WTC11 (cell line): ENCODE measurements at regions of chr5 and their contacts with region 1.

Region 1: GRCh38 chr5:141691867-141692532 is 10.0 kb upstream of the ARAP3 start:
- DNase-seq: peak; percentile 93
- ATAC-seq: peak; percentile 72
- H3K4me3 Mint-ChIP-seq: peak overlapping the region; percentile 69
- H3K27ac Mint-ChIP-seq: no peak overlapping the region
- H3K4me1 Mint-ChIP-seq: peaks cover 30% of the 10 kb centered on the region
- H3K27me3 Mint-ChIP-seq: peaks cover 10% of the 10 kb centered on the region
- CTCF ChIP-seq: peak; percentile 99

Region 2: DNA sequence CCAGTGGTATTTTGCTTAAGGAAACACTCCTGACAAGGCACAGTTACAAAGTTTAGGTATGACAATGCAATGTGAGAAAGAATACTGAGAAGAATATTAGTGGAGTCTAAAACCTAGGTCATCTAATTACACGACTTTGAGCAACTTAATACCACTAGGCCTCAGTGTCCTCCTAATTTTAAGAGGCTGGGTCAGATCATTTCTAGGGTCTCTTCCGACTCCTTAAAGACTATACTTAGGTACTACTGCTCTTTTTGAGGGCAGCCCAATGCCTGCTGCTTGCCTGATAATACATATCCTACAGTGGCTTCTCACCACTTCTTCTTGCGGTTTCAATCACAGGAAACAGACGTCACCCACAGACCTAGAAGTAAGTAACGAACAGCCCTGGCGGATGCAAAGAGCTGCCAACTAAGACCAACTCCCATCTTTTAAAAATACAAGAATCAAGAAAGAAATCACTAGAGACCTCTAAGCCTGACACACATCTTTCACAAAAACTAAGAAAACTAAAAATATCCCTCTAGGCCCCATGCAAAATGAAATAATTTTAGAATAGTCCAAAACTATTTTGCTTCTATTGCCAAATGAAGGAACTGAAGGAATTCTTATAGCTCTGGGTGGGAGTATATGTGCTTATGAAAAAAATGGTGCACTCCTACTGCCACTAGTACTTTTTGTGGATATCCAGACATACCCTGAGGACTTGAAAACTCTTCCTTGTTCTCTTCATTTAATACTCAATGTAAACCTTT is 86.3 kb before region 1 on chr5:
- CTCF ChIA-PET with region 1: no interaction called
- POLR2A ChIA-PET with region 1: no interaction called
- DNase-seq: no peak
- ATAC-seq: no peak; the same call in 1 of the 2 replicates
- H3K4me3 Mint-ChIP-seq: no peak overlapping the region
- H3K27ac Mint-ChIP-seq: peak overlapping the region; percentile 8
- H3K4me1 Mint-ChIP-seq: peaks cover 14% of the 10 kb centered on the region
- H3K27me3 Mint-ChIP-seq: no peaks in the 10 kb centered on the region
- CTCF ChIP-seq: no peak

Region 3: GRCh38 chr5:141672848-141673813 is 18.9 kb before region 1 on chr5:
- CTCF ChIA-PET with region 1: interaction called, 23 read pairs
- POLR2A ChIA-PET with region 1: no interaction called
- DNase-seq: no peak
- ATAC-seq: peak; percentile 2; the same call in 1 of the 2 replicates
- H3K4me3 Mint-ChIP-seq: no peak overlapping the region
- H3K27ac Mint-ChIP-seq: peak overlapping the region; percentile 42
- H3K4me1 Mint-ChIP-seq: peaks cover 32% of the 10 kb centered on the region
- H3K27me3 Mint-ChIP-seq: no peaks in the 10 kb centered on the region
- CTCF ChIP-seq: no peak

Region 4: DNA sequence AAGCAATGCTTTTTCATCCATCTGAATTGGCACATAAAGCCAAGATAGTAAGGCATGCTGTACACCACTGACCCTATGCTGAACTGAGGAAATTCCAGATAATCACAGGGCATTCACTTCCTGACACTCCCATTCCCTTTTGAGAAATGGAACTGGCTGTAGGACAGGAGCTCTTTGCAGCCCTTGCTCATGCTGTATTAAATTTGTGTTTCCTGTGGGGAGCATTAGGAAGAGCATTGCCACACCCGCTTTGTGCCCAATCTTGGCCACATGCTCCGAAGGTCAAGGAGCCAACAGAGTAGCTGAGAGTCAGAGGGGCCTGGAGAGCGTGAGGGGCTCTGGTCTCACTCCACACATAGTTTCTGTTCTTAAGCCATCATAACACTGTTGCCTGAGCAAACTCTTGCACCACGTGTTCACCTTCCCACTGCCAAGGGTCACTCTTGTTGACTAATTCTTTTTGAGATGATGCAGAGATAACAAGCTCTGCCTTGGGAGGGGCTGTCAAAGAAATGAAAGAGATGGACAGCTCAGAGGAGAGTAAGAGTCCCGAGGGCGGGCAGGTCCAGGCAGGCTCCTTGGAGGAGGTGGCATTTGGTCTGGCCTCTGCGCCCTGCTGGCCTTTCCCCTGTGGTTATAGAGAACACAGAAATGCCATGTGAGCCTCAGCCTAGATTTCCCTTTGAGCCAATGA is 21.8 kb after region 1 on chr5:
- CTCF ChIA-PET with region 1: interaction called, 15 read pairs
- POLR2A ChIA-PET with region 1: no interaction called
- DNase-seq: no peak
- ATAC-seq: no peak
- H3K4me3 Mint-ChIP-seq: no peak overlapping the region
- H3K27ac Mint-ChIP-seq: no peak overlapping the region
- H3K4me1 Mint-ChIP-seq: peaks cover 47% of the 10 kb centered on the region
- H3K27me3 Mint-ChIP-seq: no peaks in the 10 kb centered on the region
- CTCF ChIP-seq: no peak

Region 5: DNA sequence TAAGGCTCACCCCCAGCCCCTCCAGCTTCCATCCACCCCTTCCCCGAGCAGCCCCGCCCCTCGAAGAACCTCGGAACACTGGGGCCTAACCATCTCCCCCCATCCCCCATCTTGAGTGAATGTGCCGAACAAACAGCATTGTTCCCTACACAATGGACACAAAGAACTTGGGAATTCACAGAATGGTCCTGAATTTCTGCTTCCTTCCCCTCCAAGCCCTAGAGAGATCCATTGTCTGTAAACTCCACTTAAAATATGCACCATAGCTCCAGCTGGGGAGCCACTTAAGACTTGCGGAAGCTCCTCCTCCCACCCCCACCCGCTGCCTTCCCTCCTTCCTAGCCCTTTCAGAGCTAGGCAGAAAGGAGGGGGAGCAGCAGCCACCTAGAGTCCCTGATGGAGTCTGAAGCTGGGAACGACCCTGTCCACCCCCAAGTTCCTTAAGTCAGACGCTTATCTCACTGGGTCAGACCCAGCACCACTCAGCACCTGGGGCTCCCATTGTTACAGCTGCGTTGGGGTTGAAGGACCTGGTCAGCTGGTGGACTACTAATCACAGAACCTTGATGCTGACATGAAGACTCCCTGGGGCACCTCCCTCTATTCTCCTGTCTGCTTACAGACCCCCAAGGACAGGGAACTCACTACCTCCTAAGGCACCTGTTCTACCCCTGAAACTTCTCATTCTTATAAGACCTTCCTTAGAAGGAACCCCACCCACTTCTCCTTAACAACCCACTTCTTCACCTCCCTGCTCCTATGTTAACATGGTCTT is 124.8 kb after region 1 on chr5:
- CTCF ChIA-PET with region 1: interaction called, 46 read pairs
- POLR2A ChIA-PET with region 1: no interaction called
- DNase-seq: peak; percentile 84
- ATAC-seq: peak; percentile 66
- H3K4me3 Mint-ChIP-seq: peak overlapping the region; percentile 8; the same call in 1 of the 2 replicates
- H3K27ac Mint-ChIP-seq: peak overlapping the region; percentile 96
- H3K4me1 Mint-ChIP-seq: peaks cover 87% of the 10 kb centered on the region
- H3K27me3 Mint-ChIP-seq: peaks cover 2% of the 10 kb centered on the region; the same call in 1 of the 2 replicates
- CTCF ChIP-seq: no peak

Region 6: DNA sequence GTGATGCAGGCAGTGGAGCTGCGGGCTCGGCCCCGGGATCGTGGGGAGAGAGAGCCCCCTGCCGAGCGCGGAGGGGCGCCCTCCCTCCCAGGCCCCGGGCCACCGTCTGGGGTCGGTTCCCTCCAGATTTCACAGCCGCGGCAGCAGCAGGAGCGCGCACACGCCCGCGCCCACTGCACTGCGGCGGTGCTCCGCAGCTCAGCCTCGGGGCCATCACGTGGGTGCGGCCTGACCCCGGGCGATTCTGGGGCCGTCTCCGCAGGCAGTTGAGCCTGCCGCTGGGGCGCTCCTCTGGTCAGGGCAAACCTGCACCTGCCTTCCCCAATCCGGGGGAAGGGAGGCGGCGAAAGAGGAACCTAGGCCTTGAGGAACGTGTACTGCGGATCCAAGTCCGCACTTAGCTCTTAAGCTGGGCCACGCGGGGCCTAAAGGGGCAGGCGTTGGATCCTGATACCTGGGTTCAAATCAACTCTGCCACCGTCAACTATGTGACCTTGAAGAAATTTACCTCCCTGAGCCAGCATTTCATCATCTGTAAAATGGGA is 222.3 kb after region 1 on chr5:
- CTCF ChIA-PET with region 1: interaction called, 18 read pairs
- POLR2A ChIA-PET with region 1: no interaction called
- DNase-seq: peak; percentile 77
- ATAC-seq: peak; percentile 79
- H3K4me3 Mint-ChIP-seq: peak overlapping the region; percentile 66
- H3K27ac Mint-ChIP-seq: no peak overlapping the region
- H3K4me1 Mint-ChIP-seq: peaks cover 29% of the 10 kb centered on the region
- H3K27me3 Mint-ChIP-seq: peaks cover 27% of the 10 kb centered on the region
- CTCF ChIP-seq: no peak

Region 7: DNA sequence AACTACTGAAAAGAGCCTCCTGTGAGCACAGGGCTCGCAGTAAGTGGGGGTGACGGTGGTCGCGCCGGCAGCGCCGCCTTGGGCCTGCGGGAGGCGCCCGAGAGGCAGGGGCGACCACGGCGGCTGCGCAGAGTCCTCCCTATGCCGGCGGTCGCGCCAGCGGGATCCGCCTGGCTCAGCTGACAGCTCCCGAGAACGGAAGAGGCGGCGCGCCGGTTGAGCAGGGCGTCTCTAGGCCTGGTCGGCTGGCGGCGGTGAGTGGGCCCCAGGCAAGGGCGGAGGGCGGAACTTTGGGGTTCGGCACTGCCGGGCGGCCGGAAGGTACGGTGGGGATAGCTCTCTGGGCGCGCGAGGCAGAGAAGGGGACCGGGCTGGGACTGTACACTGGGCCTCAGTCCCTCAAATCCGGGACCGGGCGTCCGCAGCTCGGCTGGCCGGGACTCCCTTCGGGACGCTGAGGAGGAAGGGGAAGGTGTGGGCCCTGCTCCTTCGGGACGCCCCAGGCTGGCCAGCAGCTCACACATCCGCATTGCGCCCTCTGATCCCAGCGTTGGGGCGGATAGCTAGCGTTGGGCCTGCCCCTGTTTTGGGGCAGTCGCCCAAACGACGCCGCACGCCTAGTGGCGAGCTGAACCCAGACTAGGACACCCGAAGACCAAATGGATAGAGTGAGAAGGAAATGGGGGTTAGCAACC is 277.1 kb after region 1 on chr5 and contains the start of gene RNF14:
- CTCF ChIA-PET with region 1: interaction called, 45 read pairs
- POLR2A ChIA-PET with region 1: no interaction called
- DNase-seq: peak; percentile 95
- ATAC-seq: peak; percentile 96
- H3K4me3 Mint-ChIP-seq: peak within 1 kb of the TSS; percentile 80
- H3K27ac Mint-ChIP-seq: peak within 1 kb of the TSS; percentile 92
- H3K4me1 Mint-ChIP-seq: peaks cover 19% of the 10 kb centered on the region
- H3K27me3 Mint-ChIP-seq: no peaks in the 10 kb centered on the region
- CTCF ChIP-seq: peak; percentile 98
- total RNA-seq, gene RNF14: 17.0 to 22.6 TPM (median 20.5 TPM) in 3 replicates